ENCODE measurements at regions of chr1 and their contacts with region 1.

Region 1: GRCh38 chr1:229128066-229128608 is 142.8 kb upstream of the RAB4A start:
- DNase-seq: no peak
- H3K4me3 ChIP-seq: no peak overlapping the region
- H3K27ac ChIP-seq: no peak overlapping the region
- H3K4me1 ChIP-seq: no peaks in the 10 kb centered on the region
- H3K27me3 ChIP-seq: no peaks in the 10 kb centered on the region
- CTCF ChIP-seq: no peak
- POLR2A ChIP-seq: no peak

Region 2: GRCh38 chr1:229117664-229118300 is 10.4 kb before region 1 on chr1:
- CTCF ChIA-PET with region 1: no interaction called
- POLR2A ChIA-PET with region 1: no interaction called
- dilution Hi-C with region 1: no loop called
- intact Hi-C with region 1: no loop called
- DNase-seq: no peak
- H3K4me3 ChIP-seq: no peak overlapping the region
- H3K27ac ChIP-seq: no peak overlapping the region
- H3K4me1 ChIP-seq: no peaks in the 10 kb centered on the region
- H3K27me3 ChIP-seq: no peaks in the 10 kb centered on the region
- CTCF ChIP-seq: no peak
- POLR2A ChIP-seq: no peak

Region 3: GRCh38 chr1:229162825-229163515 is 34.8 kb after region 1 on chr1:
- CTCF ChIA-PET with region 1: no interaction called
- POLR2A ChIA-PET with region 1: no interaction called
- dilution Hi-C with region 1: no loop called
- intact Hi-C with region 1: loop called (anchors 1 kb)
- DNase-seq: no peak
- H3K4me3 ChIP-seq: no peak overlapping the region
- H3K27ac ChIP-seq: no peak overlapping the region
- H3K4me1 ChIP-seq: no peaks in the 10 kb centered on the region
- H3K27me3 ChIP-seq: no peaks in the 10 kb centered on the region
- CTCF ChIP-seq: no peak
- POLR2A ChIP-seq: no peak

Measured in endothelial cell of umbilical vein (primary cell).